Activated T-helper 1 cell treated with anti-CD3 and anti-CD28 coated beads, Interleukin-12 subunit alpha, Interleukin-12 subunit beta, Interleukin-2, Interleukin-4 antibody, amounts not matched to agents 30 ng/mL and 10 ng/mL and 1 ng/mL, durations not matched to agents 14 hours and 24 hours and 36 hours (primary cell): ENCODE measurements at regions of chr3 and their contacts with region 1.

Region 1: GRCh38 chr3:45507820-45508317 is 86.7 kb upstream of the LIMD1 start:
- DNase-seq: no peak
- H3K4me3 Mint-ChIP-seq: no peak overlapping the region
- H3K27ac Mint-ChIP-seq: no peak overlapping the region
- H3K4me1 Mint-ChIP-seq: peaks cover 13% of the 10 kb centered on the region
- H3K27me3 Mint-ChIP-seq: no peaks in the 10 kb centered on the region

Region 2: DNA sequence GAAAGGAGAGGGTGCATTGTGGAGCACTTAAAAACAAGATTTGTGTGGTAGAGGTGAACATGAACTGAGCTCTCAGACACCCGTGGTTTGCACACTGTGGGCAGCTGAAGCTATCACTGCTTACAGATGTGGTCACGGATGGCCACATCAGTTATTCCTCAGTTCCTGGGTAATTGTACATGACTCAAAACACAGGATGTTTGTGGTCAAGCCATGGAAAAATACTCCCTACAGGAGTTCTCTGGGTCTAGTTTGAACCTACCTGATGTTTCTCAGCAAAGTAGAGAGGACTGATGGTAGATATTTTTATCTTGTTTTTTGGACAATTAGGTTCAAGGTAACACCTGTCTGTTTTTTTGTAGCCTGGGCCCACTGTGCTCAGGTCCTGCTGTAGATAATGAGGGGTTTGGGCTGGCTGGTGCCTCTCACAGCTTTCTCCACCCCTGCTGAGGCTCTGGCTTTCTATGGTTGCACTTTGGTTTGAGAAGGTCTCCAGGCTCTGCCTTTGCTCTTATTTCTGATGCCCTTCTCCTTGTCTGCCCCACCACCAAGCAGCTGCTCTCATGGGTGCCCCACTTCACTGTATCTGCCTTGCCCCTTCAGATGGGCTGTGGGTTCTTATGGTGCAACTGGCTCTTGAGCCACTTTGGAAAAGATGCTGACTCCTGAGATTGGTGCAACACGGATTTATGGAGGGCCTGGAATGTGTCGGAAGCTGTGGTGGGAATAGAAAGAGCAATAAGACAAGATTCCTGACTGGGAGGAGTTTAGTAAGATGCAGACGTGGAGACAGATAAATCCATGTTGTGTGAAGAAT is 401.8 kb before region 1 on chr3:
- intact Hi-C with region 1: loop called (anchors 5 kb)
- DNase-seq: peak; percentile 78
- H3K4me3 Mint-ChIP-seq: peak overlapping the region; percentile 49
- H3K27ac Mint-ChIP-seq: peak overlapping the region; percentile 69
- H3K4me1 Mint-ChIP-seq: peaks cover 69% of the 10 kb centered on the region
- H3K27me3 Mint-ChIP-seq: peaks cover 29% of the 10 kb centered on the region

Region 3: DNA sequence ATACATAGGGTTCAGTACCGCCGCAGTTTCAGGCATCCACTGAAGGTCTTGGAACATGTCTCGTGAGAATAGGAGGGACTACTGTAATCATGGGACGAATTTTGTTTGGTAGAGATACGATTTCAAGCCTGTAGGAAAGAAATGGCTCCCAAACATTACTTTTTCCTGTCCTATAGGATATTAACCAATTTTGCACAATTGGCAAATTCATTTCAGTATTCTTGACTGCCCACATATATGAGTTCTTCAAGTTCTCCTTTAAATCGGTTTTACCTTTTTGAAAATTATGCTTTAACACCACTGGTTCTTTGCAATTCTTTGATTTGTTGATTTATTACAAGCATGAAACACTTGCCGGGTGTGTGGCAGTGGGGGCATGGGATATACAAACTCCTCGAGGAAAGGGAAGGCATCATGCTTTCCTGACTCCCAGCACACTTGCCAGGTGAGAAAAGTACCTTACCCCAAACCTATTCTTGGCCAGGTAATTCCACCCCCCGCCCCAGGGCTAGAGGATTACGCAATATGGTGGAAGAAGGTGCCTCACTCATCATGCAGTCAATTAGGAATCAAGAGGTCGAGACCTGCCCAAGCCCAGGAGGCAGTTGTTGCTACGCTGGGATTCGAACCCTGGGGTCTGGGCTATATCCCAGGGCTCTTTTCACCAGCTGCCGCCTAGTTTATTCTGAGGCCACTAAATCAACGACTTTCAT is 120.1 kb before region 1 on chr3:
- intact Hi-C with region 1: no loop called
- DNase-seq: peak; percentile 3
- H3K4me3 Mint-ChIP-seq: peak overlapping the region; percentile 96
- H3K27ac Mint-ChIP-seq: peak overlapping the region; percentile 84
- H3K4me1 Mint-ChIP-seq: peaks cover 18% of the 10 kb centered on the region
- H3K27me3 Mint-ChIP-seq: peaks cover 18% of the 10 kb centered on the region

Region 4: DNA sequence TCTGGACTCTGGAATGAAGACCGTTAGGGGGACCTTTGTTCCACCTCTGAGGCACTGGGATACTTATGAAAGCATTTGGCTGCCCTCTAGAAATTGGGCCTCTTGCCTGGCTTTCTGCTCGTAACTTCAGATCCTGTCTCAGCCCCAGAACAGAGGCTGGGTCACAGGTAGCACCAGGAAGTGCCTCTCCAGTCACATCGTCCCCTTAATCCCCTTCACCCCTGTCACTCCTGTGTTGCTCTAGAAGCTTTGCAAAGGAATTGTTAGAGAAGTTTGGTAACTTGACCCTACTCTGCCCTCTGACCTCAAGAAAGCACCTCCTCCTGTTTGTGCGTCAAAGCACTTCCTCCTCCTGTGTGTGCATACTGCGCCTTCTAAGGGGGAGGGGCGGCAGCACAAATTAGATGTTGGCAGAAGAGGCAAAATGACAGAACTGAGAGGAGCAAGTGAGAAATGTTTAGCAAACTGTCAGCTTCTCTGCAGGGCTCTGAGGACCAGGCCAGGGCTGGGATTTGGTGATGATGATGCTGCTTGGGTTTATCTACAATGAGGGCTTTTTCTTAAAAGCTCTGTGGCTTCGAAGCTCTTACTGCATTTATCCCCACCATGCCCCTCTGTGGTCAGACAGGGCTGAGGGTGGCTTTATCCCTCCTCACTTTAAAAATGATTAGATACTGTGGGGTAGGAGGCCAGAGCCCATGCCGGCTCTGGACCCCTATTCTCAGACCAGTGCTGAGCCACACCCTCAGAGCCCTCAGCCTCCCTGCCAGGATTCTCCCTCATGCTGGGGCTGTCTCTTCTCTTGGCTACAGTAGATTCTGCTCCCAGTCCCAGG is 43.3 kb before region 1 on chr3:
- intact Hi-C with region 1: loop called (anchors 1 kb)
- DNase-seq: peak; percentile 8
- H3K4me3 Mint-ChIP-seq: no peak overlapping the region
- H3K27ac Mint-ChIP-seq: no peak overlapping the region
- H3K4me1 Mint-ChIP-seq: peaks cover 33% of the 10 kb centered on the region
- H3K27me3 Mint-ChIP-seq: no peaks in the 10 kb centered on the region

Region 5: GRCh38 chr3:45593708-45594609 is 86.1 kb after region 1 on chr3:
- intact Hi-C with region 1: loop called (anchors 1 kb)
- DNase-seq: peak; percentile 76
- H3K4me3 Mint-ChIP-seq: peak overlapping the region; percentile 89
- H3K27ac Mint-ChIP-seq: peak overlapping the region; percentile 87
- H3K4me1 Mint-ChIP-seq: peaks cover 52% of the 10 kb centered on the region
- H3K27me3 Mint-ChIP-seq: peaks cover 6% of the 10 kb centered on the region

Region 6: GRCh38 chr3:45665101-45665572 is 157.3 kb after region 1 on chr3:
- intact Hi-C with region 1: loop called (anchors 1 kb)
- DNase-seq: peak; percentile 34
- H3K4me3 Mint-ChIP-seq: peak overlapping the region; percentile 83
- H3K27ac Mint-ChIP-seq: peak overlapping the region; percentile 86
- H3K4me1 Mint-ChIP-seq: peaks cover 53% of the 10 kb centered on the region
- H3K27me3 Mint-ChIP-seq: no peaks in the 10 kb centered on the region

Region 7: GRCh38 chr3:46078712-46079400 is 571.0 kb after region 1 on chr3:
- intact Hi-C with region 1: loop called (anchors 5 kb)
- DNase-seq: peak; percentile 82
- H3K4me3 Mint-ChIP-seq: no peak overlapping the region
- H3K27ac Mint-ChIP-seq: no peak overlapping the region
- H3K4me1 Mint-ChIP-seq: peaks cover 74% of the 10 kb centered on the region
- H3K27me3 Mint-ChIP-seq: peaks cover 7% of the 10 kb centered on the region